Posterior cingulate gyrus (tissue), 11 donors: ENCODE measurements at regions of chr14 and their contacts with region 1.

Region 1: DNA sequence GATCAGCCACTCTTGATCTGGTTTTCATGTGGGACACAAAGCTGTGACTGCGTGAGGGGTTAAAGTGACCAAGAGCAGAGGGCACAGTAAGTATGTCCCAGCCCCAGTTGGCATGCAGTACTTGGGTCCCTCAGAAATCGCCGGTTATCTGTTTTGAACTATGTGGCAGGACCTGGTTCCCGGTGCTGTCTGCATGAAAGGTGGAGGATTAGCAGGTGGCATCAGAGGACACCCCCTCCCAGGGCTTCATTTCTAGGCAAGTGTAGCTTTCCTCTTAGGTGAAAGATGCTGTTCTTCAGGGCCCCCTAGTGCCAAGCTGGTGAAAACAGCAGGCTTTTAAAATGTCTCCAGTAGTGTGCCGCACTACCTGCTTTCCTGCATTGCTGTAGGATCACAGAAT is 57.1 kb downstream of the ATG14 start:
- DNase-seq: peak in 6 of 10 donors; percentile 37 to 91 (median 54)

Region 2: DNA sequence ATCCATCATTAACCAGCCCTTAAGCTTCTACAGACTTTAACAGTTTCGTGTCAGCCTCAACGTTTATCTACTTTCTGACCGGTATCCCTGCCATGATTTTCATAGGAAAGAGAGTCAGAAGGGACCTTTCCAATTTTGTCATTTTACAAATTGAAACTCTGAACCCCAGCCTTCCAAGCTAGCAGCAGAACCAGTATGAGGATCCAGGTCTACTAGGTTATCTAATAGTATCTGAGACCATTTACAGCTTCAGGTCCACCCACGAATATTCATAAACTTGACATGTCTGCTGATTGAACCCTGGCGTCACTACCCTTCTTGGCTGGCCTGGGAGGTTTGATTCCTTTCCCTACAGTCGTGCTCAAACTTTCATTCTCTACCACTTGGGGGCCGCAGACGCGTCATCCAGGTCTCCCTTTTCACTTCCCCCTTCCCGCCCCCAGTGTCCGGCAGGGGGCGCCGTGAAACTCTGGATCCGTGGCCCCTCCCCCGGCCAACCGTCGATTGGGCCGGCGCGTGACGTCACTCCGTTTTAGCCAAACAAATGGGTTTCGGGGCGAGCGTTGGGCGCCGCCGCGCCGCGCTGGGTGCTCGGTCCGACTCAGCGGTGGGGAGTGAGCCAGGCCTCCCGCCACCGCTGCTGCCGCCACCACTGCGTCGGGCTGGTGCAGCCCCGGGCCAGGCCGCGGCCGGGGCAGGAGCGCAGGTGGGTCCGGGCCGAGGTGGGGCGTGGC is 83.5 kb before region 1 on chr14 and contains the start of gene FBXO34:
- intact Hi-C with region 1: loop called (anchors 1 kb)
- DNase-seq: peak; percentile 95 to 100 (median 98)

Region 3: GRCh38 chr14:55389330-55389729 is 34.8 kb after region 1 on chr14:
- intact Hi-C with region 1: no loop called
- DNase-seq: no peak